Dorsolateral prefrontal cortex (tissue), 120 donors: ENCODE measurements at regions of chr6 and their contacts with region 1.

Region 1: GRCh38 chr6:165662749-165663282 is at the start of gene PDE10A:
- DNase-seq: peak in 1 of 10 donors; percentile 54
- H3K4me3 ChIP-seq: peak within 1 kb of the TSS; percentile 46 to 78 (median 66)
- H3K27ac ChIP-seq: peak within 1 kb of the TSS in 39 of 59 donors; percentile 21 to 87 (median 66)
- H3K27me3 ChIP-seq: peaks cover 0 to 73% (median 31%) of the 10 kb centered on the region in 45 donors
- CTCF ChIP-seq: peak in 3 of 56 donors; percentile 6 to 9 (median 8)
- total RNA-seq, gene PDE10A: 16.1 to 90.5 (median 38.5) TPM

Region 2: DNA sequence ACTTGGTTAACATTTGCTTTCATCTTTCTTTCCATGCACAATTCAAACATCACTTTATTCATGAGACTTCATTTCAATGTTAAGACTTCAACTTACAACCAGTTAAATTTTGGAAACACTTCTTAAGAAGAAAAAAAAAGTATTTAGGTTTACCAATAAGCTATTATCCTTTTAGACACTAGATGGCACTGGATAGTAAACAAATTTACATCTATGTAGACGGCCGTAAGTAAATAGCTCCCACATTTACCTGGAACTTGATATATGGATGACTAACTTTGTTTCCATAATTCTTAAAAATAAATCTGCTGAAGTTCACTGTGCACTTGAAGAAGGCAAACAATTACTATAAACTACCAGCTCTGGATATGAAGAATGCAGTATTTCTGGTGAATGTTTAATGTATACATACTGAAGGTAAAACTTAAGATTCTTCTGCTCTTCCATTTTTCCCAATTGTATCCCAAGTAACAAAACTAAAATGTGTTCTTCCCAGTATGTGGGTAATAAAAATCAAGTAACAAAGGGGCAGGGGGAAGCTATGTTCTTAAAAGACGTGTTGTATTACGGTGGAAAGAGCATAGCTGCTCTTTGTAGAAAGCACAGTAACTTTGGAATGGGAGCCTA is 222.8 kb before region 1 on chr6:
- intact Hi-C with region 1: loop called in 1 of 2 experiments (anchors 5 kb)
- DNase-seq: no peak
- H3K4me3 ChIP-seq: no peak overlapping the region
- H3K27ac ChIP-seq: no peak overlapping the region
- H3K27me3 ChIP-seq: no peaks in the 10 kb centered on the region
- CTCF ChIP-seq: peak; percentile 50 to 88 (median 70)

Region 3: GRCh38 chr6:165573671-165574070 is 89.1 kb before region 1 on chr6:
- intact Hi-C with region 1: loop called in 1 of 2 experiments (anchors 5 kb)
- DNase-seq: no peak
- H3K4me3 ChIP-seq: no peak overlapping the region
- H3K27ac ChIP-seq: peak overlapping the region in 3 of 59 donors; percentile 5 to 36 (median 32)
- H3K27me3 ChIP-seq: no peaks in the 10 kb centered on the region
- CTCF ChIP-seq: no peak

Region 4: DNA sequence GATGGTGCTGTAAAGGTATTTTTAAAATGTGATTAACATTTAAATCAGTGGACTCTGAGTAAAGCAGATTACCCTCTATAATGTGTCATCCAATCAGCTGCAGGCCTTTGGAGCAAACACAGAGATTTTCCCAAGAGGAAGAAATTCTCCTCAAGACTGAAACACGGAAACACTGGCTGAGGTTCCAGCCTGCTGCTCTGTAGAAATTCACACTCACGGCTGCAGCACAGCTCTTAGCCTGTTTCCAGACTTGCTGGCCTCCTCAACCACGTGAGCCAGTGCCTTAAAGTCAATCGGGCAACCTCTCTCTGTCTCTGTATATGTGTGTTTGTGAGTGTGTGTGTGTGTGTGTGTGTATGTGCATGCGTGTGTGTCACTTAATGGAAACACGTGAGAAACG is 40.9 kb before region 1 on chr6:
- intact Hi-C with region 1: loop called in 1 of 2 experiments (anchors 5 kb)
- DNase-seq: no peak
- H3K4me3 ChIP-seq: no peak overlapping the region
- H3K27ac ChIP-seq: no peak overlapping the region
- H3K27me3 ChIP-seq: no peaks in the 10 kb centered on the region
- CTCF ChIP-seq: no peak